Activated B cell treated with CpG ODN at 0.5 μM for 24 hours (primary cell): ENCODE measurements at regions of chr7 and their contacts with region 1.

Region 1: DNA sequence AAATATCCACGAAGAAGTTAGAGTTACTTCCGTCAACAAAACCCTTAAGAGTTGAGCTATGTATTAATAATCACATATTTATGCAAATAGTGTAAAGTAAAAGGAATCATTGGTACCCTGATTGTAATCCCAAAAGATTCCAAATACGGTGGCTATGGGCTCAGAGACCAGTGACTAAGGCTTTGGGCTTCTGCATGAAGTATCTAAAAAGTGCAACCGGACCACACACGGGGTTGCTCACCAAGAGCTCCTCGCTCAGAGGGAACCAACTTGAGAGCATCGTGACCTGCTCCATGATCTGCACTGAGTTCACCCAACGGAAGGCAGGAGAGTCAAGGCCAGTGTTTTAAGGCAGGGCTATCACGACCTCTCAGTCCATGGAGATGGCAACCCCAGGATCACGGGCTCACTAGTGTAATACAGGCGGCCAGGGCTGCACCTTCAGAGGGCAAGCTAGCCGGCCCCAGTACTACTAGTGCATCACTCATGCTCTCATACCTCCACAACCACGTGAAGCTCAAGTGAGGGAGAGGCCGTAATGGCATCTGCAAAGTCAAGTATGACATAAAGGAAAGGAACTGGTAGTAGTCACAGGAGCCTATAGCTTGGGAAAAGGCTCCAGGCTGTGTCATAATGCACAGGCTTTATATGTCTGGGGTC is 77.1 kb upstream of the CAMK2B start:
- DNase-seq: no peak
- ATAC-seq: no peak
- H3K4me3 Mint-ChIP-seq: no peak overlapping the region
- H3K27ac Mint-ChIP-seq: no peak overlapping the region
- H3K4me1 Mint-ChIP-seq: no peaks in the 10 kb centered on the region
- H3K27me3 Mint-ChIP-seq: no peaks in the 10 kb centered on the region
- CTCF ChIP-seq: no peak

Region 2: GRCh38 chr7:44415047-44415446 is 12.5 kb after region 1 on chr7:
- CTCF ChIA-PET with region 1: no interaction called
- POLR2A ChIA-PET with region 1: no interaction called
- intact Hi-C with region 1: loop called (anchors 1 kb)
- DNase-seq: no peak
- ATAC-seq: no peak
- H3K4me3 Mint-ChIP-seq: no peak overlapping the region
- H3K27ac Mint-ChIP-seq: no peak overlapping the region
- H3K4me1 Mint-ChIP-seq: peaks cover 12% of the 10 kb centered on the region
- H3K27me3 Mint-ChIP-seq: no peaks in the 10 kb centered on the region
- CTCF ChIP-seq: no peak

Region 3: DNA sequence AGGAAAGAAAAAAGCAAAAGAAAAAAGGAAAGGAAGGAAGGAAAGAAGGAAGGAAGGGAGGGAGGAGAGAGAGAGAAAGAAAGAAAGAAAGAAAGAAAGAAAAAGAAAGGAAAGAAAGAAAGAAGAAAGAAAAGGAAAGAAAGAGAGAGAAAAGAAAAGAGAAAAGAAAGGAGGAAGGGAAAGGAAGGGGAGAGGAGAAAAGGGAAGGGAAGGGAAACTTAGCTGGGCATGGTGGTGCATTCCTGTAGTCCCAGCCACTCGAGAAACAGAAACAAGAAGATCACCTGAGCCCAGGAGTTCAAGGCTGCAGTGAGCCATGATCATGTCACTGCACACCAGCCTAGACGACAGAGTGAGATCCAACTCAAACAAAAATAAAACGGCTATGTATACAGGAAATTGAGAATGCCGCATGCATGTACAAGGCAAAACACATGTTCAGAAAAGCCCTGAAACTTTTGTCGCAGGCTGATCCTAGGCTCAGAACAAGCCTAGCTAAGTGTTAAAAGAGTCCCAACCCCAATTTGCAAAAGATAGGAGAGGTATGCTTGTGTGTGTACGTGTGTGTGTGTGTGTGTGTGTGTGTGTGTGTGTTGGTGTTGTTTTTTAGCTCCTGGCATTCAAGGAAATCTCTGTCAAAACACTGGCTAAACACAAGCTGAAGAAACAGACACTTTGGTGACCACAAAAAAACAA is 145.2 kb after region 1 on chr7:
- CTCF ChIA-PET with region 1: no interaction called
- POLR2A ChIA-PET with region 1: no interaction called
- intact Hi-C with region 1: no loop called
- DNase-seq: no peak
- ATAC-seq: no peak
- H3K4me3 Mint-ChIP-seq: no peak overlapping the region
- H3K27ac Mint-ChIP-seq: no peak overlapping the region
- H3K4me1 Mint-ChIP-seq: no peaks in the 10 kb centered on the region
- H3K27me3 Mint-ChIP-seq: peaks cover 10% of the 10 kb centered on the region
- CTCF ChIP-seq: no peak